ENCODE measurements at regions of chr12 and their contacts with region 1.

Region 1: DNA sequence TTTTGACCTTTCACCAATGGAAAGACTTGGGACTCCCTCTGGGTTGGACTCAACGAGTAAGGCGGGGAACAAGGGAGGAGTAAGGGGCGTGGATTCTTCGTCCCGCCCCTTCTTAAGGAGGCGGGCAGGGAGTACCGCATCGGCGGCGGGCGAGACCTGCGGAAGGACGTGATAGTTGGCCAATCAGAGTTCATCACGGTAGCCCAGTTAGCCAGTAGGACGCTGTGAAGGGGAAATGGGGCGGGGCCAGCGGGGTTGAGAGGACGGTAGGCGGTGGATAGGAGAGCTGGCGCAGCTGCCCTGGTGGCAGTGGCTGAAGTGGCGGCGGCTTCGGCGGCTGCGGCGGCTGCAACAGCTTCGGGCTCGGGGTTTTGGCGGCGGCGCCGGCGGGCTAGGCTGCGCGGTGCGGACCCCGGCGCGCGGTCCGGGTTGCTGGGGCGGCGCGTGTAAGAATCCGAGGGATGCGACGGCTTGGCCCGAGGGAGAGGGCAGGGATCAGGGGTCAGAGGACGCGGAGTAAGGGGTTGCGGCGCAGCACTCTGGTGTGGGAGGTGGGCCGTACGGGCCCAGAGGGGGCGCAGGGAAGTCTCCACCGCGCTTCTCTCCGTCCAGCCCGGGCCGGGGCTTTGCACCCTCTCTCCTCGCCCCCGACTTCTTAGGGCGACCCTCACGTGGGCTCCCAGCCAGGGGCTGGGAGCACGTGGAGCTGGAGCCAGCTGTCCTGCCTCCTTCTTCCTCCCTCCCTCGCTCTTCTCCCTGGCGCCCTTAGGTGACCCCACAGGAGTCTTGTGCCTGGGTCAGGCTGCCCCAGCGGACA is at the start of gene TPCN1:
- DNase-seq: peak; percentile 98 to 100
- H3K4me3 ChIP-seq: peak within 1 kb of the TSS; percentile 73 to 84 (median 74)
- H3K27ac ChIP-seq: peak within 1 kb of the TSS; percentile 67
- H3K4me1 ChIP-seq: peaks cover 0 to 10% (median 6%) of the 10 kb centered on the region in 4 experiments; a peak in 4 of 7 replicates
- H3K27me3 ChIP-seq: no peaks in the 10 kb centered on the region
- CTCF ChIP-seq: peak in 1 of 3 experiments; percentile 0; a peak in 1 of 4 replicates
- EP300 ChIP-seq: no peak
- POLR2A ChIP-seq: peak; percentile 96
- RAD21 ChIP-seq: no peak; a peak in 1 of 4 replicates
- total RNA-seq, gene TPCN1: 18.1 and 21.4 TPM in 2 replicates

Region 2: DNA sequence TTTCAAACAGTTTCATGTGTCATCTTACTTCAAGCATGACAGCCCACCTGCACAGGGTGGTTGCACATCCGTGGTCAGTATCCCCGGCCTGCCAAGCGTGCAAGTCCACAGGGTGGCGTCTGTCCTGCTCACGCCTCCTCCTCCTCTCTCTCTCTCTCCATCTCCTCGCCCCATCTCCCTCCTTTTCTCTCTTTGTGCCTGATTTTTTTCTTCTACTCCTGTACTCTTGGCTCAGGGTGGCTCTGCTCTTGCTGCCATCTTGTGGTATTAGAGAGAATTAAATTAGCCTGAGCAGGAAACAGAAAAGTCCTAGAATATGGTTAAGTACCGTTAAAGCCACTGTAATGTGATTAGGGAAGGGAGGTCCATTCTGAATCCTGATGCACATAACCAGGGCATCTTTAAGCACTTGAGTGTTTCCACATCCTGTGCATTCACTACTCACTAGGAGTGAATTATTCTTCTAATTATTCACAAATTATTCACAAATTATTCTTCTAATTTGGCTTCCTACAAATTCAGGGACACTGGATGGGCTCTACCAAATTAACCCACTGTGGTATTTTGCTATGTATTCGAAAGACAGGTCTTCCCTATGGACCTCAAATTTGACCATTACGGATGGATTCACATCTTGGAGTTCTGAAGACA is 190.4 kb before region 1 on chr12:
- CTCF ChIA-PET with region 1: no interaction called
- POLR2A ChIA-PET with region 1: no interaction called
- DNase-seq: peak; percentile 34 to 51
- H3K4me3 ChIP-seq: no peak overlapping the region
- H3K27ac ChIP-seq: no peak overlapping the region
- H3K4me1 ChIP-seq: peaks cover 0 to 4% (median 2%) of the 10 kb centered on the region in 4 experiments; a peak in 4 of 7 replicates
- H3K27me3 ChIP-seq: no peaks in the 10 kb centered on the region
- CTCF ChIP-seq: peak; percentile 54 to 84 (median 65)
- EP300 ChIP-seq: no peak
- POLR2A ChIP-seq: no peak
- RAD21 ChIP-seq: peak; percentile 67 to 77

Region 3: DNA sequence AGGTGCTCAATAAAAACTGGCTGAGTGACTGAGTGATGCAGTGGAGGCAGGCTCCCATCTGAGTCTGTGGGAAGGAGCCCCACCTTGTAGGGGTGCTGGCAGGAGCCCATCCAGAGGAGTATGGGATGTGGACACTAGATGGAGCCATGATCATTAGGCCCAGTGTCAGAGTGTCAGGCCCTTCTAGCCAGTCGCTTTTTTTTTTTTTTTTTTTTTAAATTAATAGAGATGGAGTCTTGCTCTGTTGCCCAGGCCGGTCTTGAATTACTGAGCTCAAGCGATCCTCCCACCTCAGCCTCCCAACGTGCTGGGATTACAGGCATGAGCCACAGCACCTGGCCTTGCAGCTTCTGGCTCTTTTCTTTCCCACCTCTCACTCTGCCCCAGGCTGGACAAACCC is 24.4 kb before region 1 on chr12:
- CTCF ChIA-PET with region 1: interaction called, 5 read pairs
- POLR2A ChIA-PET with region 1: interaction called, 31 read pairs
- DNase-seq: peak in 1 of 2 experiments; percentile 72
- H3K4me3 ChIP-seq: no peak overlapping the region
- H3K27ac ChIP-seq: no peak overlapping the region
- H3K4me1 ChIP-seq: peaks cover 0 to 5% (median 0%) of the 10 kb centered on the region in 4 experiments; a peak in 2 of 7 replicates
- H3K27me3 ChIP-seq: no peaks in the 10 kb centered on the region
- CTCF ChIP-seq: peak; percentile 65 to 73 (median 72)
- EP300 ChIP-seq: no peak
- POLR2A ChIP-seq: no peak
- RAD21 ChIP-seq: peak; percentile 80 to 81

Region 4: GRCh38 chr12:113208041-113208934 is 13.1 kb before region 1 on chr12:
- CTCF ChIA-PET with region 1: interaction called, 6 read pairs
- POLR2A ChIA-PET with region 1: interaction called, 31 read pairs
- DNase-seq: no peak
- H3K4me3 ChIP-seq: no peak overlapping the region
- H3K27ac ChIP-seq: no peak overlapping the region
- H3K4me1 ChIP-seq: no peaks in the 10 kb centered on the region
- H3K27me3 ChIP-seq: no peaks in the 10 kb centered on the region
- CTCF ChIP-seq: no peak
- EP300 ChIP-seq: no peak
- POLR2A ChIP-seq: no peak
- RAD21 ChIP-seq: no peak

Region 5: GRCh38 chr12:113232840-113233585 is 11.6 kb after region 1 on chr12:
- CTCF ChIA-PET with region 1: interaction called, 8 read pairs
- POLR2A ChIA-PET with region 1: interaction called, 32 read pairs
- DNase-seq: peak in 1 of 2 experiments; percentile 72
- H3K4me3 ChIP-seq: peak overlapping the region in 2 of 4 experiments; percentile 1 to 29; a peak in 2 of 8 replicates
- H3K27ac ChIP-seq: peak overlapping the region; percentile 63; the same call in 1 of the 2 replicates
- H3K4me1 ChIP-seq: peaks cover 9 to 20% (median 20%) of the 10 kb centered on the region in 4 experiments
- H3K27me3 ChIP-seq: no peaks in the 10 kb centered on the region; a peak in 1 of 7 replicates
- CTCF ChIP-seq: peak; percentile 33 to 47 (median 45)
- EP300 ChIP-seq: no peak
- POLR2A ChIP-seq: no peak
- RAD21 ChIP-seq: peak; percentile 37 to 41

Region 6: DNA sequence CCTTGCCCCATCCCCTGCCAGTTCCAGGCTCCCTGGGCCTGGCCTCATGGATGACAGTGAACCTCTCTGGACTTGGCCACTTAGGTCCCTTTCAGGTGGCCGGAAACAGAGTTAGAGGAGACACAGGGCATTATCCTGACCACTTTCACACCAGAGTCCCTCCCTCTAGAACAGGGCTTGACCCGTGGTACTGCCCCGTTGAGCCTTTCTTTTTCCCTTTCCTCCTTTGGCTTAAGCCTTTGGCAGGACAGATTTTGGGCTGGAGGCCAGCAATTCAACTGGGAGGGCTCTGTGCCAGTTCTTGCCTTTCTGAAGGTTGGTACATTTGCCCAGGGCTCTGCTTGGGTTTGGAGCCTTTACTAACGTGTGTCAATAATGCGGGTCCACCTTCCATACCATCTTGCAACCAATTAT is 22.7 kb after region 1 on chr12:
- CTCF ChIA-PET with region 1: interaction called, 7 read pairs
- POLR2A ChIA-PET with region 1: interaction called, 20 read pairs
- DNase-seq: no peak
- H3K4me3 ChIP-seq: no peak overlapping the region
- H3K27ac ChIP-seq: 0 out of 2 replicates have a peak overlapping the region, but pooled peaks have one; percentile 23
- H3K4me1 ChIP-seq: peaks cover 14 to 38% (median 18%) of the 10 kb centered on the region in 4 experiments
- H3K27me3 ChIP-seq: no peaks in the 10 kb centered on the region
- CTCF ChIP-seq: no peak
- EP300 ChIP-seq: no peak
- POLR2A ChIP-seq: no peak
- RAD21 ChIP-seq: no peak